Activated CD4-positive, alpha-beta T cell treated with anti-CD3 and anti-CD28 coated beads for 36 hours (primary cell): ENCODE measurements at regions of chr12 and their contacts with region 1.

Region 1: GRCh38 chr12:52879394-52880351 is 25.2 kb downstream of the KRT8 start:
- DNase-seq: peak; percentile 88
- ATAC-seq: peak; percentile 95
- H3K4me3 Mint-ChIP-seq: peak overlapping the region; percentile 59
- H3K27ac Mint-ChIP-seq: no peak overlapping the region
- H3K4me1 Mint-ChIP-seq: peaks cover 8% of the 10 kb centered on the region
- H3K27me3 Mint-ChIP-seq: peaks cover 5% of the 10 kb centered on the region

Region 2: DNA sequence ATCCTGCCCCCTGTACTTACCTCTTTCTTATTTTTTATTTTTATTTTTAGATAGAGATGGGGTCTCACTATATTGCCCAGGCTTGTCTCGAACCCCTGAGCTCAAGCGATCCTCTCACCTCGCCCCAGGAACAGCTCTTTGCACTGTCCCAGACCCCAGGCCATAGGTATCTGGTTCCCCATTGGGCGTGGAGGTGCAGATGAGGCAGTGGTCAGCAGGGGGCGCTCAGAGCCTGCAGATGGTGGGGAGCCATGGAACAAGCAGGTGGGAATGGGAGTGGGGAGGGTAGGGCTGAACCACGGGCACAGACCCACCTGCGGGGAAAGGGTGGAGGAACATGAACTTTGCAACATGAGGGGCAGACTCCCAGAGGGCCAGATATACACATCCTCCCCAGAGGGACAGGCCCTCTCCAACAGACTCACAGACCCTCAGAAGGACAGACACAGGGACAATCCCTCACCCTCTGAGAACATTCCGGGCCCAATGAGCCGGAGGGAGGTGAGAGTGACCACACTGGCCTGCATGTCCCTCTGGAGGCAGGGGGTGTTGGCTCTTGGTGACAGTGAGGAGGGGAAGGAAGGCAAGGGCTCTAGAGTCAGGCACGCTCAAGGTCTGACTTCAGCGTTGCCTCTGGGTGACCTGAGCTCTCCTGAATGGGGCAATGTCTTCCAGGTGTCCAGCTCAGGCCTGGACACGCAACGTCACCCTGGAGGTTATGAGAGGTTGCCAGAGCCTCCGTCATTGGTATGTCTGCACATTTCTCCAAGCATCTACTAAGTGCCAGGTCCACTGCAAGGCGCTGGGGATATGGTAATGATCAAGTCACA is 722.7 kb before region 1 on chr12:
- CTCF ChIA-PET with region 1: interaction called, 6 read pairs
- POLR2A ChIA-PET with region 1: no interaction called
- intact Hi-C with region 1: loop called (anchors 1 to 5 kb)
- DNase-seq: peak; percentile 85
- ATAC-seq: peak; percentile 65
- H3K4me3 Mint-ChIP-seq: no peak overlapping the region
- H3K27ac Mint-ChIP-seq: no peak overlapping the region
- H3K4me1 Mint-ChIP-seq: peaks cover 27% of the 10 kb centered on the region
- H3K27me3 Mint-ChIP-seq: no peaks in the 10 kb centered on the region

Region 3: GRCh38 chr12:52390739-52391617 is 488.7 kb before region 1 on chr12:
- CTCF ChIA-PET with region 1: interaction called, 11 read pairs
- POLR2A ChIA-PET with region 1: no interaction called
- intact Hi-C with region 1: no loop called
- DNase-seq: peak; percentile 21
- ATAC-seq: no peak
- H3K4me3 Mint-ChIP-seq: no peak overlapping the region
- H3K27ac Mint-ChIP-seq: no peak overlapping the region
- H3K4me1 Mint-ChIP-seq: no peaks in the 10 kb centered on the region
- H3K27me3 Mint-ChIP-seq: peaks cover 7% of the 10 kb centered on the region

Region 4: DNA sequence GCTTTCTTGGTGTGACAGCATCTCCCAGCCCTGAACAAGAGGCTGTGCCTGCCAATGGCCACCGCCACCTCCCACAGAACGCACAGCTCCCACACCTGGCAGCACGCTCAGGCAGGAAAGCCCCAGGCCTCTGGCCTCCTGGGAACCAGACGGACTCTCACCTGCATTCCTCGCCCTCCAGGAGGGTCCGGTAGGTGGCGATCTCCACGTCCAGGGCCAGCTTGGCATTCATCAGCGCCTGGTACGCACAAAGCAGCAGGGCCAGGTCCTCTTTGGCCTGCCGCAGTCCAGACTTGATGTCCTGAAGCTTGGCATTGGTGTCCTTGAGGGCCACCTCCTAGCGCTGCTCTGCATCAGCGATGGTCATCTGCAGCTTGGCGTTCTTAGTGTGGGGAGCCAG is 164.3 kb before region 1 on chr12:
- CTCF ChIA-PET with region 1: no interaction called
- POLR2A ChIA-PET with region 1: no interaction called
- intact Hi-C with region 1: loop called in 1 of 2 experiments (anchors 10 kb)
- DNase-seq: no peak
- ATAC-seq: no peak
- H3K4me3 Mint-ChIP-seq: no peak overlapping the region
- H3K27ac Mint-ChIP-seq: no peak overlapping the region
- H3K4me1 Mint-ChIP-seq: peaks cover 9% of the 10 kb centered on the region
- H3K27me3 Mint-ChIP-seq: peaks cover 18% of the 10 kb centered on the region

Region 5: GRCh38 chr12:52895061-52895887 is 15.6 kb after region 1 on chr12:
- CTCF ChIA-PET with region 1: interaction called, 32 read pairs
- POLR2A ChIA-PET with region 1: no interaction called
- intact Hi-C with region 1: no loop called
- DNase-seq: no peak
- ATAC-seq: no peak
- H3K4me3 Mint-ChIP-seq: no peak overlapping the region
- H3K27ac Mint-ChIP-seq: no peak overlapping the region
- H3K4me1 Mint-ChIP-seq: no peaks in the 10 kb centered on the region
- H3K27me3 Mint-ChIP-seq: no peaks in the 10 kb centered on the region

Region 6: GRCh38 chr12:54279866-54280467 is 1400.3 kb after region 1 on chr12 and contains the start of gene CBX5:
- CTCF ChIA-PET with region 1: no interaction called
- POLR2A ChIA-PET with region 1: no interaction called
- intact Hi-C with region 1: no loop called
- DNase-seq: peak; percentile 100
- ATAC-seq: peak; percentile 50
- H3K4me3 Mint-ChIP-seq: no peak within 1 kb of the TSS
- H3K27ac Mint-ChIP-seq: no peak within 1 kb of the TSS
- H3K4me1 Mint-ChIP-seq: peaks cover 52% of the 10 kb centered on the region
- H3K27me3 Mint-ChIP-seq: no peaks in the 10 kb centered on the region
- total RNA-seq, gene CBX5: 140 to 146 TPM